GM10248 (cell line): ENCODE measurements at regions of chr7 and their contacts with region 1.

Region 1: DNA sequence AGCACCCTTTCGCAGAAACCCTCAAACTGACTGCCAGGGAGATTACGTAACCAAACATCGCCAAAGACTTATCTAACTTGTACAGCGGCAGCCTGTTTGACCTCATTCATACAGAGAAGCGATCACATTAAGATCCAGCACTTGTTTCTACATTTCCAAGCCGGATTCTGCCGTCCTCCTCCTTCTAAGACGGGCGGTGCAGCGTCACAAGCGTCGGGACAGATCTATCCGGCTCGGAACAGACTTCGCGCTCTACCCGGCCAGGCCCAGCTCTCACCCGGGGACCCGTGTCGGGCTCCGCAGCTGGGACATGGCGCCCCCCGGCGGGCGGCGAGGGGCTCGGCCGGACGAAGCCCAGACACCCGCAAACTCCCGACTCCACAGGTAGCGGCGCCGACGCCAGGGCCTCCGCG is 373 bp downstream of the H2AZ2 start:
- DNase-seq: peak; percentile 87
- CTCF ChIP-seq: peak; percentile 83

Region 2: DNA sequence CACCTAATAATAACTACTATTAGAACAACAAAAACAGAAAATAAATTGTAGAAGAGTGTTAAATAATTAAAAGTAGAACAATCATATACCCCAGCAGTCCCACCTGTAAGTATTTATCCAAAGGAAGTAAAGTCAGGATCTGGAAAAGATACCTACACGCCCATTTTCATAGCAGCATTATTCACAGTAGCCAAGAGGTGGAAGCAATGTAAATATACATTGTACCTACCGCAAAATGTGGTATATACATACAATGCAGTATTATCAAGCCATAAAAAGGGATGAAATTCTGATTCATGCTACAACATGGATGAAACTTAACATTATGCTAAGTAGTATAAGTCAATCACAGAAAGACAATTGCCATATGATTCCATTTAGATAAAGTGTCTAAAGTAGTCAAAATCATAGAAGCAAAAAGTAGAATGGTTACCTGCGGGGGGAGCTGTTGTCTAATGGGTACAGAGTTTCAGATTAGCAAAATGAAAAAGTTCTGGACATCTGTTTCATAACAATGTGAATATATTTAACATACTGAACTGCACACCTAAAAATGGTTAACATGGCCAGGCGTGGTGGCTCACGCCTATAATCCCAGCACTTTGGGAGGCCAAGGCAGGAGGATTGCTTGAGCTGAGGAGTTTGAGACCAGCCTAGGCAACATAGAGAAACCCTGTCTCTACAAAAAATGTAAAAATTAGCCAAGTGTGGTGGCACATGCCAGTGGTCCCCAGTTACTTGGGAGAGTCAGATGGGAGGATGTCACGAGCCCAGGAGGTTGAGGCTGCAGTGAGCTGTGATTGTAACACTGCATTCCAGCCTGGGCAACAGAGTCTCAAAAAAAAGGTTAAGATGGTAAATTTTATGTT is 259.4 kb before region 1 on chr7:
- CTCF ChIA-PET with region 1: interaction called, 41 read pairs
- POLR2A ChIA-PET with region 1: no interaction called
- DNase-seq: no peak
- CTCF ChIP-seq: peak; percentile 47

Region 3: GRCh38 chr7:44824894-44825526 is 22.5 kb before region 1 on chr7:
- CTCF ChIA-PET with region 1: interaction called, 17 read pairs
- POLR2A ChIA-PET with region 1: interaction called, 4 read pairs
- DNase-seq: no peak
- CTCF ChIP-seq: no peak

Region 4: GRCh38 chr7:44858161-44858560 is 10.6 kb after region 1 on chr7:
- CTCF ChIA-PET with region 1: interaction called, 54 read pairs
- POLR2A ChIA-PET with region 1: no interaction called
- DNase-seq: no peak
- CTCF ChIP-seq: no peak

Region 5: DNA sequence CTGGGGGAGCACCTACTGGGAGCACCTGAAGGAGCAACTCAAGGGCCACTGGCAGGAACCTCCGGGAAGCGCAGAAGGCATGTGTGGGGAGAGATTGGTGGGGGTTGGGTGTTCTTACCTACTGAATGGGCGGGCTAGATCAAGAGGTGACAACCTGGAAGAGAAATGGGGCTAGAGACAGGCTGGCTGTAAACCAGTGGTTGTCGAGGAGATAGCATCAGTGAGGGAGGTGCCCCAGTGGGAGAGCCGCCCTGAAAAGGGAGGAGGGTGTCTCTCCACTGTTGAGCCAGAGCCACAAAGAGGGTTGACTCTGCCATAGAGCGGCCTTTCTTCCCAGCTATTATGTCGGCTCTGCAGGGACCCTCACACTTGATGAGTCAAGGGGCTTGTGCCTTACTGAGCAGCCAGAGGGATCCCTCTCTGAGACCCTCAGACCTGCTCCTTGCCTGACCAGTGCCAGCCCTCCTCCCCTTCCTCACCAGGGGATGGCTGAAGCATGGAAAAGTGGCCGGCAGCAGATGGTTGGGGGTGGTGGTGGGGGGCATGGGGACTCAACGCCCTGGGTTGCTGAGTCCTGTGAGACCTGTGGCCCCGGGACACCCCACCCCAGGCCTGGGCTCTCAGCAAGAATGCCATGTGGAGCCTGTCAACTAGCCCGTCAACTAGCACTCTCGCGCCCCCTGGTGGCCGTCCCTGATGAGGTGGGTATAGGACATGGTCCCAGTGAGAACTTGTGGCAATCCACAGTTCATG is 74.3 kb after region 1 on chr7:
- CTCF ChIA-PET with region 1: interaction called, 158 read pairs
- POLR2A ChIA-PET with region 1: no interaction called
- DNase-seq: peak; percentile 87
- CTCF ChIP-seq: peak; percentile 96